ENCODE measurements at regions of chr16 and their contacts with region 1.

Region 1: GRCh38 chr16:8936421-8936820 is 27.3 kb downstream of the USP7 start:
- DNase-seq: peak; percentile 76
- ATAC-seq: peak; percentile 90
- H3K4me3 Mint-ChIP-seq: no peak overlapping the region
- H3K27ac Mint-ChIP-seq: peak overlapping the region; percentile 34; the same call in 1 of the 2 replicates
- H3K4me1 Mint-ChIP-seq: peaks cover 71% of the 10 kb centered on the region
- H3K27me3 Mint-ChIP-seq: no peaks in the 10 kb centered on the region
- CTCF ChIP-seq: peak; percentile 39; the same call in 1 of the 2 replicates

Region 2: DNA sequence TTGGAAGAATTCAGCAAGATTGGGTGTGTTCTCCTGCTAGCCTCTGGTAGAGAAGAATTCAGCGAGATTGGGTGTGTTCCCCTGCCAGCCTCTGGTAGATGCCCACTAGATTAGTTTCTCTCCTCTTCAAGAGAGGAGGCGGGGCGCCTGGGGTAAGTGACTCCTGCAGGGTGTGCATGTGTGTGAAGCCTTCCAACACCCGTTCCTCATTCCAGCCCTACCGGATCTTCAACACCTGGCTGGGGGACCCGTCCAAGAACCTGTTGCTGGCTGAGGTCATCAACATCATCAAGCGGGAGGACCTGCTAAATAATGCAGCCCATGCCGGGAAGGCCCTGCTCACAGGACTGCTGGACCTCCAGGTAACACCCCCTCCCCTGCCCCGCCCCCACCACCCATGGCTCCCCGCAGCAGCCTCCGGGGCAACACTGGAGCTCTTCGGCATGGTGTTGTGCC is 160.3 kb before region 1 on chr16:
- CTCF ChIA-PET with region 1: no interaction called
- POLR2A ChIA-PET with region 1: no interaction called
- DNase-seq: no peak
- ATAC-seq: peak; percentile 71
- H3K4me3 Mint-ChIP-seq: no peak overlapping the region
- H3K27ac Mint-ChIP-seq: no peak overlapping the region
- H3K4me1 Mint-ChIP-seq: no peaks in the 10 kb centered on the region
- H3K27me3 Mint-ChIP-seq: no peaks in the 10 kb centered on the region
- CTCF ChIP-seq: no peak

Region 3: DNA sequence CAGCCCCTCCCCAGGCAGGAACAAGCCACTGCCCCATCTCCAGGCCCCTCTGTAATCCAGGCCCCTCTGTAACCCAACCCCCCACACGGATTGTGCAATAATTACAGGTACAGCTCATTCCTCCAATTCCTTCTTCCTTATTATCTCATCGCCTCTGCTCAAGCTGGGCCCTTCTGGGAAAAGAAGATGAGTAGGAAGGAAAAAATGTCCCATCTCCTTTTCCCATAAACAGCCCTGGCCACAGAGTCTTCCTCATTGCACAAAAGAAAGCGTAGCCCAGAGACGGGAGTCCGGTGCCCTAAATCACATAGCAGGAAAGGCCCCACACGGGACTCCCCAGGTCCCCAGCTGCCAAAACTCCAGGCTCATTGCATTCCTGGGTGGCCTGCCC is 57.9 kb before region 1 on chr16:
- CTCF ChIA-PET with region 1: interaction called, 15 read pairs
- POLR2A ChIA-PET with region 1: no interaction called
- DNase-seq: no peak
- ATAC-seq: no peak
- H3K4me3 Mint-ChIP-seq: no peak overlapping the region
- H3K27ac Mint-ChIP-seq: 0 out of 2 replicates have a peak overlapping the region, but pooled peaks have one; percentile 93
- H3K4me1 Mint-ChIP-seq: peaks cover 13% of the 10 kb centered on the region
- H3K27me3 Mint-ChIP-seq: no peaks in the 10 kb centered on the region
- CTCF ChIP-seq: no peak

Region 4: GRCh38 chr16:8905168-8905762 is 31.2 kb before region 1 on chr16:
- CTCF ChIA-PET with region 1: interaction called, 32 read pairs
- POLR2A ChIA-PET with region 1: no interaction called
- DNase-seq: no peak
- ATAC-seq: peak; percentile 63
- H3K4me3 Mint-ChIP-seq: no peak overlapping the region
- H3K27ac Mint-ChIP-seq: peak overlapping the region; percentile 51; the same call in 1 of the 2 replicates
- H3K4me1 Mint-ChIP-seq: 0 out of 2 replicates have a peak, but pooled peaks cover 3% of the 10 kb centered on the region
- H3K27me3 Mint-ChIP-seq: no peaks in the 10 kb centered on the region
- CTCF ChIP-seq: no peak

Region 5: DNA sequence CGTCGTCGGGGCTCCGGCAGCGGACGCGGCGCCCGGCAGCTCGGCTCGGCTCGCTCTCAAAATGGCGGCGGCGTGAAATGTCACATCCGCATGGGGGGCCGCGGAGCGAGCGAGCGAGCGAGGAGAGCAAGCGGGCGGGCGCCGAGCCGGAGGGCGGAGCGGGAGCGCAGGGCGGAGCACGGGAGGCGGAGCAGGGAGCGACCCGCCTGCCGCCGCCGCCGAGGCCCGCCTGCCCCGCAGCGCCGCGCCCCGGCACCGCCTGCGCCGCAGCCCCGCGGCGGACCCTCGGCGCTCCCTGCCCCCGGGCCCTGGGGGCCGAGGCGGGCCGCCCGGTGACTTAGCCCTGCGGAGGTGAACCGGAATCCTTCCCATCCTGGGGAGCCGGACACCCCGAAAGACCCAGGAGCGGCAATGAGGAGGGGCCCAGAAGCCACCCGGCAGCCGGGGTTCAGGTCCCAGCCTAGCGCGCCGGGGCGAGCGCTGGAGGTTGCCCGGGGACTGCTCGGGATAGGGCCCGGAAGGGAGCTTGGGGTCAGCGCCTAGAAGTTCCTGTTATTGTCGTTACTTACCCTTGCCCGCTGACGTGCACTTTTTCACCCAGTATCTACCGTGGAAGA is 27.5 kb after region 1 on chr16 and contains the start of gene USP7:
- CTCF ChIA-PET with region 1: interaction called, 43 read pairs
- POLR2A ChIA-PET with region 1: interaction called, 4 read pairs
- DNase-seq: peak; percentile 89
- ATAC-seq: peak; percentile 73
- H3K4me3 Mint-ChIP-seq: peak within 1 kb of the TSS; percentile 90
- H3K27ac Mint-ChIP-seq: 0 out of 2 replicates have a peak within 1 kb of the TSS, but pooled peaks have one; percentile 44
- H3K4me1 Mint-ChIP-seq: peaks cover 59% of the 10 kb centered on the region
- H3K27me3 Mint-ChIP-seq: peaks cover 9% of the 10 kb centered on the region
- CTCF ChIP-seq: no peak
- total RNA-seq, gene USP7: 153 to 211 TPM (median 161 TPM) in 3 replicates

Region 6: GRCh38 chr16:8998114-8998513 is 61.7 kb after region 1 on chr16:
- CTCF ChIA-PET with region 1: interaction called, 436 read pairs
- POLR2A ChIA-PET with region 1: no interaction called
- DNase-seq: no peak
- ATAC-seq: no peak
- H3K4me3 Mint-ChIP-seq: no peak overlapping the region
- H3K27ac Mint-ChIP-seq: no peak overlapping the region
- H3K4me1 Mint-ChIP-seq: peaks cover 5% of the 10 kb centered on the region; the same call in 1 of the 2 replicates
- H3K27me3 Mint-ChIP-seq: no peaks in the 10 kb centered on the region; the same call in 1 of the 2 replicates
- CTCF ChIP-seq: no peak

Region 7: GRCh38 chr16:9134739-9135138 is 198.3 kb after region 1 on chr16:
- CTCF ChIA-PET with region 1: interaction called, 18 read pairs
- POLR2A ChIA-PET with region 1: interaction called, 3 read pairs
- DNase-seq: peak; percentile 80
- ATAC-seq: peak; percentile 84
- H3K4me3 Mint-ChIP-seq: no peak overlapping the region
- H3K27ac Mint-ChIP-seq: no peak overlapping the region
- H3K4me1 Mint-ChIP-seq: peaks cover 17% of the 10 kb centered on the region
- H3K27me3 Mint-ChIP-seq: no peaks in the 10 kb centered on the region
- CTCF ChIP-seq: peak; percentile 24; the same call in 1 of the 2 replicates

Measured in WTC11 (cell line).